Mammary epithelial cell (primary cell): ENCODE measurements at regions of chr7 and their contacts with region 1.

Region 1: GRCh38 chr7:142471820-142472219 is 214.0 kb upstream of the PRSS58 start:
- DNase-seq: no peak
- H3K4me3 ChIP-seq: no peak overlapping the region
- H3K27ac ChIP-seq: no peak overlapping the region
- H3K4me1 ChIP-seq: peaks cover 7% of the 10 kb centered on the region
- H3K27me3 ChIP-seq: no peaks in the 10 kb centered on the region
- CTCF ChIP-seq: no peak

Region 2: GRCh38 chr7:142357953-142358520 is 113.8 kb before region 1 on chr7:
- CTCF ChIA-PET with region 1: no interaction called
- dilution Hi-C with region 1: no loop called
- in situ Hi-C with region 1: no loop called
- intact Hi-C with region 1: no loop called
- DNase-seq: peak; percentile 65
- H3K4me3 ChIP-seq: no peak overlapping the region
- H3K27ac ChIP-seq: no peak overlapping the region
- H3K4me1 ChIP-seq: no peaks in the 10 kb centered on the region
- H3K27me3 ChIP-seq: no peaks in the 10 kb centered on the region
- CTCF ChIP-seq: peak; percentile 82 to 92

Region 3: GRCh38 chr7:142412551-142413193 is 59.1 kb before region 1 on chr7:
- CTCF ChIA-PET with region 1: no interaction called
- dilution Hi-C with region 1: no loop called
- in situ Hi-C with region 1: no loop called
- intact Hi-C with region 1: no loop called
- DNase-seq: peak; percentile 61
- H3K4me3 ChIP-seq: no peak overlapping the region
- H3K27ac ChIP-seq: peak overlapping the region; percentile 71
- H3K4me1 ChIP-seq: peaks cover 17% of the 10 kb centered on the region
- H3K27me3 ChIP-seq: no peaks in the 10 kb centered on the region
- CTCF ChIP-seq: peak; percentile 75 to 89

Region 4: DNA sequence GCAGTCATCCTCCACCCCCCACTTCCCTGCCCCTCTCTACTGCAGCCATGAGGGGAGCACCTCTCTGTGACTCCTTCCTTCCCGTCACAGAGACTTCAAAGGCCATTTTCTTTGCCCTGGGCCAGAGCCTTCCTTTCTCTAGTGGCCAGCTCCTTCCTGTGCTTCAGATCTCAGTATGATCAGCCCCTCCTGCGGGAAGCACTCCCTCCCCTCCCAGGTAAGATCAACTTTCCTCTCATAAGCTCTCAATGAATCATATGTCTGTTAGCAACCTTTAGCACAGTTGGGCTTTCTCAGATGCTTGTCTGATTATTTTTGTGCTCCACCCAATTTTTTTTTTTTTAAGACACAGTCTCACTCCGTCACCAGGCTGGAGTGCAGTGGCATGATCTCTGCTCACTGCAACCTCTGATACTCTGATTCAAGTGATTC is 36.5 kb after region 1 on chr7:
- CTCF ChIA-PET with region 1: no interaction called
- dilution Hi-C with region 1: no loop called
- in situ Hi-C with region 1: no loop called
- intact Hi-C with region 1: loop called (anchors 1 kb)
- DNase-seq: peak; percentile 88
- H3K4me3 ChIP-seq: no peak overlapping the region
- H3K27ac ChIP-seq: no peak overlapping the region
- H3K4me1 ChIP-seq: no peaks in the 10 kb centered on the region
- H3K27me3 ChIP-seq: no peaks in the 10 kb centered on the region
- CTCF ChIP-seq: no peak

Region 5: GRCh38 chr7:142535123-142535779 is 63.4 kb after region 1 on chr7:
- CTCF ChIA-PET with region 1: no interaction called
- dilution Hi-C with region 1: no loop called
- in situ Hi-C with region 1: no loop called
- intact Hi-C with region 1: no loop called
- DNase-seq: peak; percentile 70
- H3K4me3 ChIP-seq: no peak overlapping the region
- H3K27ac ChIP-seq: no peak overlapping the region
- H3K4me1 ChIP-seq: peaks cover 24% of the 10 kb centered on the region
- H3K27me3 ChIP-seq: no peaks in the 10 kb centered on the region
- CTCF ChIP-seq: peak; percentile 94 to 98

Region 6: DNA sequence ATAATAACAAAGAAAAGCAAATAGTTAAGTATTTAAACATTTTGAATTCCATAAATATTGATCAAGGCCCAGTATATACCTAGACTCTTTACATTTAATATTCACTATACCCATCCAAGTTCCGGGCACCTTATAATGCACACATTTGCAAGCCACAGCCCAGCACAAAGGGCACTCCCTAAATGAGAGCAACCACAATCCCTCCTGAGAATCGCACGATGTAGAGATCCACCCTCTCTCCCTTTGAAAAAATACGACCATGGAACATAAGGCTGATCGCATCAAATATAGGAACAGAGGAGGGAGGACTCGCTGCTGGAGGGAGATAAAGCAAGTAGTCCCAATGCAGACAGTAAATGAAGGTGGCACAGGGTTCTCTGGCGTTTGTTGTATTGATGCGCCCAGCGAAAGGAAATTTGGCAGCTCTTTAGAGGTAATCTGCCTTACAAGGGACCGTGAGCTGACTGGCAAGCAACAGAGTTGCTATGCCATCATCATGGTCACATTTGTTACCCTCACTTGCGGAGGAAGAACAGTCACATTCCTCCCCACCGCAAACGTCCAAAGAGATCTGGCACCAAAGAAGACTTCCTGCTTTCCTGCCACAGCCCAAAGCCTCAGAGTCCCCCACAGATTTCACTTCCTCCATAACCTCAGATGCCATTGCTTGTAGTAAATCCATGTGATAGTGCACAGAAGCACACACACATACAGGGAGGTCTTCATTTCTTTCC is 733.9 kb after region 1 on chr7:
- CTCF ChIA-PET with region 1: no interaction called
- dilution Hi-C with region 1: no loop called
- in situ Hi-C with region 1: no loop called
- intact Hi-C with region 1: no loop called
- DNase-seq: no peak
- H3K4me3 ChIP-seq: no peak overlapping the region
- H3K27ac ChIP-seq: no peak overlapping the region
- H3K4me1 ChIP-seq: peaks cover 5% of the 10 kb centered on the region
- H3K27me3 ChIP-seq: no peaks in the 10 kb centered on the region
- CTCF ChIP-seq: no peak